Activated CD4-positive, alpha-beta T cell treated with anti-CD3 and anti-CD28 coated beads, Interleukin-2, amount 10 ng/mL, durations not matched to agents 24 days and 14 days (primary cell): ENCODE measurements at regions of chr1 and their contacts with region 1.

Region 1: GRCh38 chr1:150765296-150765976 is at the start of gene CTSS:
- DNase-seq: peak; percentile 70
- H3K4me3 Mint-ChIP-seq: peak within 1 kb of the TSS; percentile 83
- H3K27ac Mint-ChIP-seq: peak within 1 kb of the TSS; percentile 91
- H3K4me1 Mint-ChIP-seq: peaks cover 30% of the 10 kb centered on the region
- H3K27me3 Mint-ChIP-seq: no peaks in the 10 kb centered on the region
- total RNA-seq, gene CTSS: 26.9 and 28.3 TPM in 2 replicates

Region 2: DNA sequence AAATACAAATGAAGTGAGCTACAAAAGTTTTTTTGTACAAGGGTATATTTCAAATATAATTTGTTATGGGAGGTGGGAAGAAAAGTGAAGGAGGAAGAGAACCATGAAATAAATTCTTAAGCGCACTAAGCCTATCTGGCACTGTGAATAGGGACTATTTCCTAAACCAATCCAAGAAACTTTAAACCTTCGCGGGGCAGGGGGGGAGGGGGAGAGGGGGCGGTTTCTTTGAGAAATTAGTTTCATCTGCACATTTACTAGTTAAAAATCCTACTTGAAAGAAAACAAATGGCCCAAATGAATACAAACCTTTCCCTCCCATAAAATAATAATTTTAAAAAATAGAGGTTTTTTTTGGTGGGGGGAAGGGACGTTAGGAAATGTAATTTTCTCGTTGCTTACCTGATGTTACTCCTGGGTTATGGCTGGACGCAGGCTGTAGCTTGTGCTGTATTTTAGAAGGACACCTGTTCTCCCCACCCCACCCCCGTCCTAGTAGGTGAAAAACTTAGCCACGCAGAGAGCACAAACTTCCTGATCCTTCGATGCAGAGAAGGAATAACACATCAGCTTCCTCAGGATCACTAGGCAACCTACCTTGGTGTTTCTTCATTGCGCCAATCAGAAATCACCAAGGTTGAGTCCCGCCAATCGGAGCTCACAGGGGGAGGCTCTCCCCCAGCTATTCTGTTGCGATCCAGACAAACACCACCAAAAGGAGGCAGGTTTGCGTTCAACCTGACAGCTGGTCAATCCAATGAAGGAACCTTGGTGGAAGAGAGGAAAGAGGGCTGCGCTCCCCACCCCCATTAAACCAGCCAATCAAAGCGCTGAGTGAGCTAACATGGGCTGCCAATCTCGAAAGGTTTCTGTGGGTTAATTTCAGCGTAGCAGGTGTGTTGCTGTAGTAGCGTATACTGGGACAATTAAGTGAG is 68.6 kb before region 1 on chr1 and contains the start of gene GOLPH3L:
- intact Hi-C with region 1: loop called (anchors 2 kb)
- DNase-seq: peak; percentile 97
- H3K4me3 Mint-ChIP-seq: peak within 1 kb of the TSS; percentile 90
- H3K27ac Mint-ChIP-seq: peak within 1 kb of the TSS; percentile 92
- H3K4me1 Mint-ChIP-seq: peaks cover 19% of the 10 kb centered on the region
- H3K27me3 Mint-ChIP-seq: peaks cover 11% of the 10 kb centered on the region
- total RNA-seq, gene GOLPH3L: 19.6 and 19.8 TPM in 2 replicates

Region 3: GRCh38 chr1:150748878-150749719 is 16.3 kb before region 1 on chr1:
- intact Hi-C with region 1: loop called (anchors 1 kb)
- DNase-seq: no peak
- H3K4me3 Mint-ChIP-seq: no peak overlapping the region
- H3K27ac Mint-ChIP-seq: peak overlapping the region; percentile 29
- H3K4me1 Mint-ChIP-seq: peaks cover 7% of the 10 kb centered on the region
- H3K27me3 Mint-ChIP-seq: no peaks in the 10 kb centered on the region

Region 4: DNA sequence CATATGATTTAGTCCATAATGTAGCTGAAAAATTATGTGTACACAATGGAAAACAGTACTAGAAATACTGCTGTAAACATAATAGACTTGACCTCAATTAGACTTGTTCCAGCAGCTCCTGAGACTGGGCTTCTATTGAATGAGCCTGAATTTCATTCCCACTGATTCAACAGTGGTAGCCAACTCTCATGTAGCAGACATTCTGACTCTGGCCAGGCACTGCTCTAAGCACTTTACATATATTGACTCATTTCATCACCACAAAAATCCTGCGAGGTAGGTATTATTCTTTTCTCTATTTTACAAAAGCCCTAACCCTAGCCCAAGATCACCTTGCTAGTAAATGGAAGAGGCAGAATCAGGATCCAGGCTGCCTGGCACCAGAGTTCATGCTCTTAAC is 13.0 kb after region 1 on chr1:
- intact Hi-C with region 1: no loop called
- DNase-seq: no peak
- H3K4me3 Mint-ChIP-seq: no peak overlapping the region
- H3K27ac Mint-ChIP-seq: no peak overlapping the region
- H3K4me1 Mint-ChIP-seq: peaks cover 10% of the 10 kb centered on the region
- H3K27me3 Mint-ChIP-seq: no peaks in the 10 kb centered on the region

Region 5: GRCh38 chr1:150979092-150980056 is 213.9 kb after region 1 on chr1:
- intact Hi-C with region 1: loop called (anchors 10 kb)
- DNase-seq: peak; percentile 97
- H3K4me3 Mint-ChIP-seq: no peak overlapping the region
- H3K27ac Mint-ChIP-seq: peak overlapping the region; percentile 10
- H3K4me1 Mint-ChIP-seq: peaks cover 25% of the 10 kb centered on the region
- H3K27me3 Mint-ChIP-seq: no peaks in the 10 kb centered on the region